SK-N-SH (cell line): ENCODE measurements at regions of chr20 and their contacts with region 1.

Region 1: GRCh38 chr20:21615617-21616080 is 89.8 kb upstream of the PAX1 start:
- DNase-seq: peak; percentile 70
- H3K4me3 ChIP-seq: no peak overlapping the region; a peak in 1 of 4 replicates
- H3K27ac ChIP-seq: no peak overlapping the region
- H3K4me1 ChIP-seq: no peaks in the 10 kb centered on the region
- H3K27me3 ChIP-seq: peaks cover 17% of the 10 kb centered on the region; the same call in 1 of the 2 replicates
- CTCF ChIP-seq: peak; percentile 85
- EP300 ChIP-seq: no peak
- RAD21 ChIP-seq: peak; percentile 73

Region 2: DNA sequence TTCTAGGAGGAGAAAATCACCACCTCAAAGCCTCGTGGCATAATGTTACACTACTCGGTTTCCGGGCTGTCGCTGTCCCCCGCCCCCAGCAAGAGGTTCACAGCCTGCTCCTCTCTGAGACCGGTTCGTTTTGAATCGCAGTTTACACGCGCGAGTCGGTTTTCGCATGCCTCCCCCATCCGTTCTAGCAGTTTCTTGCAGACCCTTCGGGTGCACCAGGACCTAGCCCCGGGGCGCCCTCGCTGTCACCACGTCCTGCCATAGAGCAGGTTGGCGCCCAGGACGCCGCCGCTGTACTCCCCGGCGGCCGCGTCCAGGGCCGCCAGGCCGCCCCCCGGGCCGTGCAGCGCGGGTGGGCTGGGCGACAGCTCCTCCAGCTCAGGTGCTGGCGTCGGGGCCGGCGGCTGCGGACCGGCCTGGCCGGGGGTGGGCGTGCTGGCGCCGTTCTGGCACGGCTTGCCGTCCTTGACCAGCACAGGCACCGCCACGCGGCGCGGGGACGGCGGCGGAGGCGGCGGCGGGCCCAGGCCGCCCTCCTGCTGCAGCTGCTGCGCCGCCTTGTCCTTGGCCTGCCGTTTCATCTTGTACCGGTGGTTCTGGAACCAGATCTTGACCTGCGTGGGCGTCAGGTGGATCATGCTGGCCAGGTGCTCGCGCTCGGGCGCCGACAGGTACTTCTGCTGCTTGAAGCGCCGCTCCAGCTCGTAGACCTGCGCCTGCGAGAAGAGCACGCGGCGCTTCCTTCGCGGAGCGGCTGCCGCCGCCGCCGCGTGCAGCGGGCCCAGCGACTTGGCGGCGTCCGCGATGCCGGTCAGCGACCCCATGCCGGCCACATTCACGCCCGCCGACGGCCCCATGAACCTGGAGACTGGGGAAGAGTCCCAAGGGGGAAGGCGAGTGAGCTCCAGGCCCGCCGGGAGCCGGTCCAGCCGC is 219.7 kb before region 1 on chr20:
- CTCF ChIA-PET with region 1: no interaction called
- POLR2A ChIA-PET with region 1: no interaction called
- DNase-seq: peak; percentile 68
- H3K4me3 ChIP-seq: no peak overlapping the region; a peak in 1 of 4 replicates
- H3K27ac ChIP-seq: no peak overlapping the region
- H3K4me1 ChIP-seq: no peaks in the 10 kb centered on the region; a peak in 1 of 4 replicates
- H3K27me3 ChIP-seq: peaks cover 50% of the 10 kb centered on the region
- CTCF ChIP-seq: no peak
- EP300 ChIP-seq: no peak
- RAD21 ChIP-seq: no peak

Region 3: DNA sequence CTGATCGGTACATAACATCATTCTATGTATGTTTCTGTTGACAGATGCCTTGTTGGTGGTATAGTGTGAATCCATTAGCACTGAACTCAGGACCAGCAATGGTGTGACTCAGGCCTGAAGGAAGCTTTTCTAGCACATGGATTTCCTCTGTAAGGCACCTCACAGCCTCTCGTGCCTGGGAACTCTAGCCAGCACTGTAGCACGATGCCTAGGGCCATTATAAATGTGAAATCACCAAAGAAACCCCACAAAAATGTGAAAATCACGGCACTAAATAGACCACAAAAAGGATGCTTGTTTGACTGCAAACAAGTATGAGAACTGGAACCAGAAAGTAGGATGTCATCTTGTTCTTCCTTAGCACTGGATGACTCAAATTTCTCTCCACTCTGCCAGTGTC is 38.1 kb before region 1 on chr20:
- CTCF ChIA-PET with region 1: interaction called, 12 read pairs
- POLR2A ChIA-PET with region 1: no interaction called
- DNase-seq: no peak
- H3K4me3 ChIP-seq: no peak overlapping the region
- H3K27ac ChIP-seq: no peak overlapping the region
- H3K4me1 ChIP-seq: no peaks in the 10 kb centered on the region
- H3K27me3 ChIP-seq: peaks cover 50% of the 10 kb centered on the region; the same call in 1 of the 2 replicates
- CTCF ChIP-seq: no peak
- EP300 ChIP-seq: no peak
- RAD21 ChIP-seq: no peak

Region 4: DNA sequence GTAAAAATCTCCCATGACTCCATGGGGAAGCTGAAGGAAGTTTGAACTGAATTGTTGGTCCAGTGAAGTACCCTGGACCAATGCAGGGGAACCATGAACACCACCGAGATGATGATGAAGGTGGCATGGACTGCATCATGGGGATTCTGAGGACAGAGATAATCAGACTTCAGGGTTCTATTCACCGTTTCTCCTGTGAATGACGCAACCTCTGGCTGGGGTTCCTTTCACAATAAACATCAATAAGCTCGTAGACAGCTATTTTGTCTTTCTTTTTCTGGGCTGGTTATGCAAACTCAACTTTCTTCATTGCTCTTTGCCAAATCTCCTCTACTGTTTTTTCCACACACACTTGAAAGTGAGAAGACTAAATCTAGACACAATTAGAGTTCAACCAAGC is 13.8 kb before region 1 on chr20:
- CTCF ChIA-PET with region 1: interaction called, 16 read pairs
- POLR2A ChIA-PET with region 1: no interaction called
- DNase-seq: no peak
- H3K4me3 ChIP-seq: no peak overlapping the region
- H3K27ac ChIP-seq: no peak overlapping the region
- H3K4me1 ChIP-seq: no peaks in the 10 kb centered on the region
- H3K27me3 ChIP-seq: no peaks in the 10 kb centered on the region; the same call in 1 of the 2 replicates
- CTCF ChIP-seq: no peak
- EP300 ChIP-seq: no peak
- RAD21 ChIP-seq: no peak